Heart left ventricle (tissue), 16 donors: ENCODE measurements at regions of chr6 and their contacts with region 1.

Region 1: DNA sequence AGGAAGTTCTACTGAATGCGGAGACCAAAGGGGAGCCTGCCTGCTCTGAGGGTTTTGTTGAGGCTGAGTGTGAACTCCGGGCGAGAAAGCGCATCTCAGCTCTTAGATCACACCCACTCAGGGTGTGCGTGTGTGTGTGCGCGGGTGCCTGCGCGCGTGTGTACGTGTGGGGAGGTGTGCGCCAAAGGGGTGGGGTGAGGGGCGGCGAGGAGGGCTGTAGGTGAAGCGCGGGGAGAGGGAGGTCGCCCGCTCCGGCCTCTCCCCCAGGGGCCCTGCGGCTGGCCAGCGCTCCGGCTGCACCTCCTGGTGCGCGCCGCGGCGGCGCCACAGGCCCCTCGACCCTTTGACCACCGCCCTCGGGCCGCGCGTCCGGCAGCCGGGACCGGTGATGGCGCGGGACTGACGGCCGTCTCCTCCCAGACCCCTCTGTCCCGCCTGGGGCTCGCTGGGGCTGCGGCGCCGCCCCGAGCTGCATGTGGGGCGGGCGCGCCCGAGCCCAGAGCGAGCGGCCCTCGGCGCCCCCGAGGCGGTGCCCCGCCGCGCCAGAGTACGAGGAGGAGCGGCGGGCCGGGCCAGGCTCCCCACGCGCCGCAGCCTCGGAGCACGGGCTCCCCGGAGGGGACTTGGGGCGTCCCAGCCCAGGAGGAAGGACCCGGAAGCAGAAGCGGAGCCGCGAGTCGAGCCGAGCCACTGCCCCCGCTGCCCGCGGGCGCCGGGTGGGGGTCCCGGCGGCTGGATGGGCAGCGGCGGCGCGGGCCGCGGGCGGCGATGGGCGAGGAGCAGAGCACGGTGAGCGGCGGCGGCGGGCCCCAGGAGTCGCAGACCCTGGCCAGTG is at the start of gene RNF217:
- DNase-seq: peak; percentile 70 to 84 (median 74)
- ATAC-seq: peak; percentile 73 to 90 (median 78)
- H3K4me3 ChIP-seq: peak within 1 kb of the TSS; percentile 67 to 95 (median 85)
- H3K27ac ChIP-seq: peak within 1 kb of the TSS; percentile 84 to 96 (median 89)
- H3K4me1 ChIP-seq: peaks cover 0 to 39% (median 21%) of the 10 kb centered on the region in 12 donors
- H3K27me3 ChIP-seq: no peaks in the 10 kb centered on the region
- CTCF ChIP-seq: peak in 5 of 12 donors; percentile 6 to 29 (median 20)
- POLR2A ChIP-seq: peak in 1 of 2 donors; percentile 48
- total RNA-seq, gene RNF217: 8.9 to 21.6 (median 14.2) TPM

Region 2: DNA sequence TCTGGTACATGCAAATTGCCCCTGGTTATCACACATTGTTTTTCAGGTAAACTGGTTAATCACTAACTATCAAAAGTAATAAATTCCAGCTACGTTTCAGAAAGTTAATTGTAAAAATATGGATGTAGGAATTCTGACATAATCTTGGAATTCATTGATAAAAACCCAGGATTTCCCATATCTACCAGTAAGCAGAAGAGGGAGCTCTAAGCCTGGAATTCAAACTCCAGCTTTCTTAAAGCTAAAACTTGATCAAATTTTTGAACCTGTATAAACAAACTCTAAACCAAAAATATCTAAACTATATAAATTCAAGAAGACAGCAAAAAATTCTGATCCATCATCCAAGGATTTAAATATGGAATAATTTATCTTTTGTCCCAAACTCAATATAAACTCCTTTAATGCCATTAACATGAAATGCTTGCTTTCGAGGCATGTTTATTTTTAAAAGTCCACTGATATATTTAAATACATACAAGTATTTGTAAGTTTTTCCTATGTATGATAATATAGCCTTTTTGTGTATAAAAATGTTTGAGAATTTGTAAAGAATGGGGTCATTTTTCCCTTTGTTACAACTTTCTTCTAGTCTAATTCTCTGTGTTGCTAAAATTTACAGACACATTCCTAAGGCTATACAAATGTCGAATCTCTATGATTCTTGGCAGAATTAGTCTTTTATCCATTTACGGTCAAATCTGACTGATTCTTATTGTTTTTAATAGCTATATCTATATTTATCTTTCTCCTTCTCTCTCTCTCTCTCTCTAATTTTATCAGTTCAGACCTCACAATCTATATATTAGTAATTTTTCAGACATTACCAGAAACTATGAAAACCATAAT is 91.2 kb before region 1 on chr6:
- intact Hi-C with region 1: loop called in 1 of 10 experiments (anchors 5 kb)
- DNase-seq: no peak
- ATAC-seq: no peak
- H3K4me3 ChIP-seq: no peak overlapping the region
- H3K27ac ChIP-seq: no peak overlapping the region
- H3K4me1 ChIP-seq: no peaks in the 10 kb centered on the region
- H3K27me3 ChIP-seq: no peaks in the 10 kb centered on the region
- CTCF ChIP-seq: peak; percentile 46 to 89 (median 76)
- POLR2A ChIP-seq: no peak

Region 3: GRCh38 chr6:124903791-124904190 is 58.2 kb before region 1 on chr6:
- intact Hi-C with region 1: no loop called
- DNase-seq: no peak
- ATAC-seq: no peak
- H3K4me3 ChIP-seq: no peak overlapping the region
- H3K27ac ChIP-seq: no peak overlapping the region
- H3K4me1 ChIP-seq: no peaks in the 10 kb centered on the region
- H3K27me3 ChIP-seq: no peaks in the 10 kb centered on the region
- CTCF ChIP-seq: no peak
- POLR2A ChIP-seq: no peak

Region 4: GRCh38 chr6:125001684-125002405 is 39.9 kb after region 1 on chr6:
- intact Hi-C with region 1: loop called in 1 of 10 experiments (anchors 5 kb)
- DNase-seq: no peak
- ATAC-seq: peak in 2 of 4 donors; percentile 46 to 57
- H3K4me3 ChIP-seq: peak overlapping the region in 10 of 12 donors; percentile 5 to 55 (median 43)
- H3K27ac ChIP-seq: peak overlapping the region in 3 of 12 donors; percentile 10 to 61 (median 25)
- H3K4me1 ChIP-seq: peaks cover 0 to 38% (median 23%) of the 10 kb centered on the region in 12 donors
- H3K27me3 ChIP-seq: no peaks in the 10 kb centered on the region
- CTCF ChIP-seq: no peak
- POLR2A ChIP-seq: no peak

Region 5: GRCh38 chr6:125099211-125100073 is 137.4 kb after region 1 on chr6:
- intact Hi-C with region 1: loop called in 8 of 10 experiments (anchors 5 to 10 kb)
- DNase-seq: peak; percentile 60 to 76 (median 69)
- ATAC-seq: peak; percentile 78 to 97 (median 95)
- H3K4me3 ChIP-seq: peak overlapping the region; percentile 37 to 66 (median 54)
- H3K27ac ChIP-seq: peak overlapping the region in 5 of 12 donors; percentile 3 to 54 (median 42)
- H3K4me1 ChIP-seq: peaks cover 0 to 20% (median 2%) of the 10 kb centered on the region in 12 donors
- H3K27me3 ChIP-seq: no peaks in the 10 kb centered on the region
- CTCF ChIP-seq: peak in 2 of 12 donors; percentile 13 to 18
- POLR2A ChIP-seq: no peak

Region 6: DNA sequence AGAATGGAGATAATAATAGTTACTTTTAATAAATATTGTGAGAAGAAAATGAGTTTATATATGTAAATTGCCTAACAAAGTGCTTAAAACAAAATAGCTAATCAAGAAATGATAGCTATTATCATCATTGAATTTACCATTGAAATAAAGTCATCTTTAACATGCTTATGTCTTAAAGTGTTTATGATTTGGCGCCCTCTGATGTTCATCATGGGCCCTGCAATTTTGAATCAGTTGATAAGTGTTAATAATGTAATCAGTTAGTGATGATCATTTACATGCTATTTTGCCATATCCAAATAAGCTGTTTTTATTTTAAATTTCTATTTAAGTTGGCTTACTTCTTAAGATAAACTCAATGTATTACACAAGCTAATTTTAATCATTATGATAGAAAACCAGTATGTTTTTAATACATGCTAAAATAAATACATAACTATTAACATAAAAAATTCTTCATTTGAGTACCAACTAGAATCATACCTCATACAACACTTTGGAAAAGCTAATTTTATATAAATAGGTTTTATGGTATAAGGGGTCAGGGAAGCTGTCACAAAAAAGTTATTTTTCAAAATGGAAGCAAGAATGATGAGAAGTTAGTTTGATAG is 152.4 kb after region 1 on chr6:
- intact Hi-C with region 1: loop called in 5 of 10 experiments (anchors 5 to 10 kb)
- DNase-seq: peak in 1 of 5 donors; percentile 44
- ATAC-seq: peak in 1 of 4 donors; percentile 48
- H3K4me3 ChIP-seq: no peak overlapping the region
- H3K27ac ChIP-seq: no peak overlapping the region
- H3K4me1 ChIP-seq: no peaks in the 10 kb centered on the region
- H3K27me3 ChIP-seq: no peaks in the 10 kb centered on the region
- CTCF ChIP-seq: peak; percentile 78 to 95 (median 88)
- POLR2A ChIP-seq: no peak

Region 7: GRCh38 chr6:125301435-125302391 is 339.7 kb after region 1 on chr6 and contains the start of gene HDDC2:
- intact Hi-C with region 1: loop called in 1 of 10 experiments (anchors 10 kb)
- DNase-seq: peak; percentile 84 to 91 (median 87)
- ATAC-seq: peak; percentile 65 to 93 (median 92)
- H3K4me3 ChIP-seq: peak within 1 kb of the TSS; percentile 46 to 84 (median 74)
- H3K27ac ChIP-seq: peak within 1 kb of the TSS; percentile 83 to 97 (median 92)
- H3K4me1 ChIP-seq: peaks cover 0 to 31% (median 21%) of the 10 kb centered on the region in 12 donors
- H3K27me3 ChIP-seq: no peaks in the 10 kb centered on the region
- CTCF ChIP-seq: no peak
- POLR2A ChIP-seq: peak in 1 of 2 donors; percentile 65
- total RNA-seq, gene HDDC2: 70.2 to 123 (median 92.6) TPM

Region 8: DNA sequence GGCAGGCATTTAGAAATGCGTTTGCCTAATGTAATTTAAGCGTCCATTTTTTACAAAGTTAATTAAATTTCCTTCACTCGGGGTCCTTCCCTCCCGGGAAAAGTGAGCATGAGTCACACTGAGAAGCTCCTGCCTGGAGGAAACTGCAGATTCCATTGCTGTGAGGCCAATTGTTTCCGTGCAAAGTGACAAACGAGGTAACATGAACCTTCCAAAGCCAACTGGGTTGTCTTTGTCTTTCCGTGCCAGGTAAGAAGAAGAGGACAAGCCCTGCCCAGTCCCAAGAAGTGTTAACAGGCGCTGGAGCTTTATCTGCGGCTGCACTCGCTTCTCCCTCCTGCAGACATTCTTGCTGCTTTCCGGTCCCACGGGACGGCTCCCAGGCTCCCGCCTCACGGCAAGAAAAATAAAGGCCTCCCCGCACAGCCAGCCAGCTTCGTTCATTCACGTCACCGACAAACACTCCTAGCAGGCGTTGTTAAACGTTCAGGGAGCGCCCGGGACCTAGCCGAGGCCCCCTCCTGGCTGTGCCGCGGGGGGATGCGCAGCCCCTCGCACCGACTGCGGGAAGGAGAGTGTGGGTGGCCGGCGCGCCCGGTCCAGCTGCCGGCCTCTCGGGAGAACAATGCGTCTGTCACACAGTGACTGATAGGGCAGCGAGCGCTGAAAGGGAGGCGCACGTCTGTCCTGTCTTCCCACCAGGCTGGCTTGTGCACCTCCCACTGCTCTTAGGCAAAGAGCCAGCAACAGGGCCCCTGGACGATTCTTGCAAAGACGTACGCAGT is 401.2 kb after region 1 on chr6:
- intact Hi-C with region 1: no loop called
- DNase-seq: peak; percentile 82 to 90 (median 88)
- ATAC-seq: peak; percentile 83 to 89 (median 86)
- H3K4me3 ChIP-seq: peak overlapping the region; percentile 26 to 62 (median 54)
- H3K27ac ChIP-seq: peak overlapping the region; percentile 39 to 94 (median 86)
- H3K4me1 ChIP-seq: peaks cover 0 to 36% (median 16%) of the 10 kb centered on the region in 12 donors
- H3K27me3 ChIP-seq: peaks cover 0 to 26% (median 0%) of the 10 kb centered on the region in 9 donors
- CTCF ChIP-seq: no peak
- POLR2A ChIP-seq: no peak